ENCODE measurements at regions of chr17 and their contacts with region 1.

Region 1: GRCh38 chr17:78313735-78314648 is 45.9 kb downstream of the SOCS3 start:
- DNase-seq: peak in 1 of 2 donors; percentile 84
- H3K4me3 ChIP-seq: peak overlapping the region; percentile 62 to 78
- H3K27ac ChIP-seq: peak overlapping the region; percentile 81 to 83
- H3K4me1 ChIP-seq: peaks cover 18 to 27% of the 10 kb centered on the region in 2 donors
- H3K27me3 ChIP-seq: no peaks in the 10 kb centered on the region
- CTCF ChIP-seq: peak in 1 of 3 experiments; percentile 4

Region 2: DNA sequence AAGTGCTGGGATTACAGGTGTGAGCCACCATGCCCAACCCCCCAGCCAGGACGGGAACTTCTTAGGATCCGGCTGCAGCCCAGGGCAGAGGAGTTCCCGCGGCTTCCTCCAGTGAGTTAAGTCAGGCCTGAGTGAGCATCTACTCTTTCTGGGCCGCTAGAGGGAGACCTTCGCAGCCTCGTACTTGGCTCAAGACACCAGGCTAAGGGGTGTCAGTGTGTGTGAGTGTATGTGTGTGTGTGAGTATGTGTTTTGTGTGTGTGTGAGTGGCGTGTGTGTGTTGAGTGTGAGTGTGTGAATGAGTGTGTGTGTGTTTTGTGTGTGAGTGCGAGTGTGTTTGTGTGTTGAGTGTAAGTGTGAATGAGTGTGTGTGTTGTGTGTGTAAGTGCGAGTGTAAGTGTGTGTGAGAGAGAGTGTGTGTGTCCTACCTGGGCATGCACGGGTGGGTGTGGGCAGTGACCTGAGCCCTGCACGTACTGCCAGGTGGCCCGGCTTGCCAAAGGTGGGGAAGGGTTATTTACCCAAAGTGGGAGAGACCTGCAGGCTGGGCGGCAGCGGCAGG is 24.1 kb before region 1 on chr17:
- intact Hi-C with region 1: loop called (anchors 2 kb)
- DNase-seq: peak in 1 of 2 donors; percentile 85
- H3K4me3 ChIP-seq: no peak overlapping the region
- H3K27ac ChIP-seq: no peak overlapping the region
- H3K4me1 ChIP-seq: no peaks in the 10 kb centered on the region
- H3K27me3 ChIP-seq: no peaks in the 10 kb centered on the region
- CTCF ChIP-seq: peak; percentile 77 to 79 (median 77)

Region 3: GRCh38 chr17:78300962-78301822 is 12.8 kb before region 1 on chr17:
- intact Hi-C with region 1: no loop called
- DNase-seq: no peak
- H3K4me3 ChIP-seq: no peak overlapping the region
- H3K27ac ChIP-seq: no peak overlapping the region
- H3K4me1 ChIP-seq: no peaks in the 10 kb centered on the region
- H3K27me3 ChIP-seq: no peaks in the 10 kb centered on the region
- CTCF ChIP-seq: no peak